IMR-90 (cell line): ENCODE measurements at regions of chr22 and their contacts with region 1.

Region 1: GRCh38 chr22:36239401-36240171 is at the start of gene APOL2:
- DNase-seq: peak; percentile 93
- ATAC-seq: peak; percentile 96
- H3K4me3 ChIP-seq: peak within 1 kb of the TSS; percentile 65
- H3K27ac ChIP-seq: peak within 1 kb of the TSS; percentile 73
- H3K4me1 ChIP-seq: peaks cover 19% of the 10 kb centered on the region
- H3K27me3 ChIP-seq: no peaks in the 10 kb centered on the region
- CTCF ChIP-seq: peak; percentile 73
- POLR2A ChIP-seq: peak; percentile 84
- RAD21 ChIP-seq: peak; percentile 59
- total RNA-seq, gene APOL2: 40.3 and 57.5 TPM in 2 replicates

Region 2: DNA sequence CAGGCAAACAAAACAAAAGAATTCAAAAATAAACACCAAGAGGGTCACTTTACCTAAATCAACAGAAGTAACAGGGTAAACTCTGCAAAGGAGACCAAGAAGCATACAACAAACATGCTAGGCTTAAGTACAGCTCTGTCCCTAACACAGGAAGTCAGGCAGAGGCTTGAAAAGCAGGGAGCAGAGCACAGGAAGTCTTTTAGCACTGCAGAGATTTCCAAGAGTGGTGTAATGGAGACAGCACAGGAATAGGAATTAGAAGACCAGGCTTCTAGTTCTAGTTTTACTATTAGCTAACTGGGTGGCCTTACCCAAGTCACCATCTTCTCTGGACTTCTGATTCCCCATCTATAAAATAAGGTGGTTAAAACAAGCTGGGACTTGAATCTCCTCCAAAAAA is 212.8 kb before region 1 on chr22:
- CTCF ChIA-PET with region 1: no interaction called
- POLR2A ChIA-PET with region 1: no interaction called
- dilution Hi-C with region 1: no loop called
- in situ Hi-C with region 1: no loop called
- intact Hi-C with region 1: no loop called
- DNase-seq: peak; percentile 60
- ATAC-seq: no peak
- H3K4me3 ChIP-seq: peak overlapping the region; percentile 98
- H3K27ac ChIP-seq: no peak overlapping the region
- H3K4me1 ChIP-seq: peaks cover 13% of the 10 kb centered on the region
- H3K27me3 ChIP-seq: no peaks in the 10 kb centered on the region
- CTCF ChIP-seq: no peak
- POLR2A ChIP-seq: no peak
- RAD21 ChIP-seq: peak; percentile 22; the same call in 1 of the 2 replicates

Region 3: GRCh38 chr22:36256478-36256877 is 16.9 kb after region 1 on chr22:
- CTCF ChIA-PET with region 1: interaction called, 3 read pairs
- POLR2A ChIA-PET with region 1: interaction called, 7 read pairs
- dilution Hi-C with region 1: no loop called
- in situ Hi-C with region 1: no loop called
- intact Hi-C with region 1: loop called (anchors 1 kb)
- DNase-seq: peak; percentile 55
- ATAC-seq: peak; percentile 64
- H3K4me3 ChIP-seq: no peak overlapping the region
- H3K27ac ChIP-seq: no peak overlapping the region
- H3K4me1 ChIP-seq: peaks cover 7% of the 10 kb centered on the region; the same call in 1 of the 2 replicates
- H3K27me3 ChIP-seq: no peaks in the 10 kb centered on the region
- CTCF ChIP-seq: no peak
- POLR2A ChIP-seq: no peak
- RAD21 ChIP-seq: no peak

Region 4: GRCh38 chr22:36277482-36278291 is 38.1 kb after region 1 on chr22:
- CTCF ChIA-PET with region 1: interaction called, 3 read pairs
- POLR2A ChIA-PET with region 1: no interaction called
- dilution Hi-C with region 1: no loop called
- in situ Hi-C with region 1: no loop called
- intact Hi-C with region 1: loop called (anchors 5 kb)
- DNase-seq: peak; percentile 56
- ATAC-seq: peak; percentile 74
- H3K4me3 ChIP-seq: no peak overlapping the region
- H3K27ac ChIP-seq: no peak overlapping the region
- H3K4me1 ChIP-seq: no peaks in the 10 kb centered on the region
- H3K27me3 ChIP-seq: no peaks in the 10 kb centered on the region
- CTCF ChIP-seq: peak; percentile 63
- POLR2A ChIP-seq: peak; percentile 38; the same call in 1 of the 2 replicates
- RAD21 ChIP-seq: peak; percentile 37